GM12878 (cell line): ENCODE measurements at regions of chr13 and their contacts with region 1.

Region 1: DNA sequence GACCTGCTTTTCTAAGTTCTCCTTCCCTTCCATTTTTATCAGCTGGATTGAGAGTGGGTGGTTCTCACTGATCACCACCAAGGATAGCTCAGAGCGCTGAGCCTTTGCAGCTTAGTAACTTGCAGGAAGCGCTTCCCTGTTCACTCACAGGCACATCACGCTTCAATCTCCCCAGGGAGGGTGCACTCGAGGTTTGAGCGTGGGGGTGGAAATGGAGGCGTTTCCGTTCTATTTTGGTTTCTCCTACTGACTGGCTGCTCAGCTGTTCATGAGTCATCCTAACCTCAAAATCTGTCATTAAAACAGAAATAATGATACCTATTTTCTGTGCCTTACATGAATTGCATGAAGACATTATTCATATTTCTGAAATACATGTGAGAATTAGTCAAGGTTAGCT is 292.1 kb downstream of the SPRY2 start:
- DNase-seq: peak; percentile 89
- ATAC-seq: peak; percentile 98
- H3K4me3 ChIP-seq: no peak overlapping the region
- H3K27ac ChIP-seq: peak overlapping the region; percentile 18; the same call in 1 of the 2 replicates
- H3K4me1 ChIP-seq: peaks cover 21% of the 10 kb centered on the region
- H3K27me3 ChIP-seq: no peaks in the 10 kb centered on the region
- CTCF ChIP-seq: no peak
- EP300 ChIP-seq: peak; percentile 94 to 98
- POLR2A ChIP-seq: no peak
- RAD21 ChIP-seq: no peak

Region 2: GRCh38 chr13:79998381-79998880 is 50.4 kb before region 1 on chr13:
- CTCF ChIA-PET with region 1: no interaction called
- POLR2A ChIA-PET with region 1: no interaction called
- RAD21 ChIA-PET with region 1: no interaction called
- SMC1A ChIA-PET with region 1: interaction called, 13 read pairs
- in situ Hi-C with region 1: no loop called
- intact Hi-C with region 1: no loop called
- DNase-seq: no peak
- ATAC-seq: no peak
- H3K4me3 ChIP-seq: no peak overlapping the region
- H3K27ac ChIP-seq: no peak overlapping the region
- H3K4me1 ChIP-seq: no peaks in the 10 kb centered on the region
- H3K27me3 ChIP-seq: no peaks in the 10 kb centered on the region
- CTCF ChIP-seq: no peak
- EP300 ChIP-seq: no peak
- POLR2A ChIP-seq: no peak
- RAD21 ChIP-seq: no peak

Region 3: DNA sequence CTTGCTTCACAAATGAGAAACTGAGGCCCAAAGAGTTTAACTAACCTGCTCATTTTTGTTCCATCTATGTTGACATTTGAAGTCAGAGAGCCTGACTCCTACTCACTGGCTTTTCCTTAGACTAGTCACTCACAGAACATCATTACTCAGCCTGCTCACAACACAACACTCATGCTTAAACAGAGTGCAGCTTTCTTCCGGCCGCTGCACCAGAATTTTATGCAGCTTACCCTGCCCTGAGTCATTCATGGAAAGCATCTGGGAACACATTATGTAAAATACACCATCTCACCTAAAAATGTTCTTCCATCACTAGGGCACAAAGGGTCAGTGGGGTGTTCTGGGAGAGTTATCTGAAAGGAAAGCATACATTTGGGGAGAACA is 11.3 kb before region 1 on chr13:
- CTCF ChIA-PET with region 1: interaction called, 7 read pairs
- POLR2A ChIA-PET with region 1: interaction called, 16 read pairs
- RAD21 ChIA-PET with region 1: interaction called, 49 read pairs
- SMC1A ChIA-PET with region 1: interaction called, 70 read pairs
- in situ Hi-C with region 1: no loop called
- intact Hi-C with region 1: no loop called
- DNase-seq: no peak
- ATAC-seq: peak; percentile 67
- H3K4me3 ChIP-seq: no peak overlapping the region
- H3K27ac ChIP-seq: no peak overlapping the region
- H3K4me1 ChIP-seq: peaks cover 8% of the 10 kb centered on the region; the same call in 1 of the 2 replicates
- H3K27me3 ChIP-seq: no peaks in the 10 kb centered on the region
- CTCF ChIP-seq: no peak
- EP300 ChIP-seq: no peak
- POLR2A ChIP-seq: no peak
- RAD21 ChIP-seq: no peak

Region 4: DNA sequence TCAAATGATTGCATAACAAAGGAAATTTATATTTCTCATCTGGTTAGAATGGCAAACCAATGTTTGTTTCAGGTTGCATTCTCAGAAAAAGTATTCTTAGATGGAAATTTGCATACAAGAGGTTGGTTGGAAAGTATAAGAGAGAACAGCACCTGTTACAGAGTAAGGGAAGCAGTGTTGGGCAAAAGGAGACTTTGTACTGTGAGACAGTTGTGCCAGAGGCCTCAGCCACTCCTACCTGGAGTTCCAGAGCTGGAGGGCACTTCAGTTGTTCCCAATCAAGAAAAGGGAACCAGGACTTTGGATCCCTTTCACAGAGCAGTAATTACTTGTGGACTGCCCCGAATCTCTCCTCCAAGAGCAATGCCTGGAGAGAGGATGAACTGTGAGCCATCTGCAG is 210.4 kb after region 1 on chr13:
- CTCF ChIA-PET with region 1: no interaction called
- POLR2A ChIA-PET with region 1: no interaction called
- RAD21 ChIA-PET with region 1: interaction called, 4 read pairs
- SMC1A ChIA-PET with region 1: interaction called, 6 read pairs
- in situ Hi-C with region 1: no loop called
- intact Hi-C with region 1: loop called (anchors 5 kb)
- DNase-seq: no peak
- ATAC-seq: peak; percentile 55
- H3K4me3 ChIP-seq: no peak overlapping the region
- H3K27ac ChIP-seq: no peak overlapping the region
- H3K4me1 ChIP-seq: peaks cover 9% of the 10 kb centered on the region; the same call in 1 of the 2 replicates
- H3K27me3 ChIP-seq: no peaks in the 10 kb centered on the region
- CTCF ChIP-seq: no peak
- EP300 ChIP-seq: no peak
- POLR2A ChIP-seq: no peak
- RAD21 ChIP-seq: no peak